ENCODE measurements at regions of chr9 and their contacts with region 1.

Region 1: DNA sequence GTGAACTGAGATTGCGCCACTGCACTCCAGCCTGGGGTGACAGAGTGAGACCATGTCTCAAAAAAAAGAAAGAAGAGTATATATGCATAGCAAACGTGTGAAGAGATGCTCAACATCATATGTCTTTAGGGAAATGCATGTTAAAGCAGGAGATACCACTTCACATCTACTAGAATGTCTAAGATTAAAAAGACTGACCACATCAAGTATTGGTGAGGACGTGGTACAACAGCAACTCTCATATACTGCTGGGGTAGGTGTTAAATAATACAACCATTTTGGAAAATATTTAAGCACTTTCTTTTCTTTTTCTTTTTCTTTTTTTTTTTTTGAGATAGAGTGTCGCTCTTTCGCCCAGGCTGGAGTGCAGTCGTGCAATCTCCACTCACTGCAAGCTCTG is 1.6 kb upstream of the TBC1D13 start:
- DNase-seq: no peak
- H3K4me3 ChIP-seq: no peak overlapping the region
- H3K27ac ChIP-seq: no peak overlapping the region
- H3K4me1 ChIP-seq: peaks cover 7% of the 10 kb centered on the region
- H3K27me3 ChIP-seq: no peaks in the 10 kb centered on the region
- CTCF ChIP-seq: no peak

Region 2: DNA sequence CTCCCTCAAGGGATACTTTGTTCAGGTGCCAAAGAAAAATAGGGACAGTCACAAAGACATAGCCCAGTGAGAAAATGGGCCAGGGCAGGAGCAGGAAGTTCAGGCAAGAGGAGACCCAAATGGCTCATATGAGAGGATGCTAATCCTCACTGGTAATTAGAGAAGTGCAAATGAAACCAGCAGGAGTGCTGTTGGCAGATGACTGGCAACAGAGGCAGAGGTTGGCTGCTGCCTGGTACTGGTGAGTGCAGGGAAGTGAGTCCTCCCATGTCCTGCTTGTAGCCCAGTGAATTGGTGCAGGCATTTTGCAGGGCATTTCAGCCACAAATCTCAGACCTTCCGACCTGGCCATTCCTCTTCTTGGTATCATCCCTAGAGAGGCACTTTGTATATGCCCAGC is 306.2 kb before region 1 on chr9:
- CTCF ChIA-PET with region 1: no interaction called
- POLR2A ChIA-PET with region 1: interaction called, 10 read pairs
- intact Hi-C with region 1: no loop called
- DNase-seq: no peak
- H3K4me3 ChIP-seq: no peak overlapping the region
- H3K27ac ChIP-seq: no peak overlapping the region
- H3K4me1 ChIP-seq: no peaks in the 10 kb centered on the region
- H3K27me3 ChIP-seq: no peaks in the 10 kb centered on the region
- CTCF ChIP-seq: no peak

Measured in A673 (cell line).